B cell (primary cell): ENCODE measurements at regions of chr1 and their contacts with region 1.

Region 1: DNA sequence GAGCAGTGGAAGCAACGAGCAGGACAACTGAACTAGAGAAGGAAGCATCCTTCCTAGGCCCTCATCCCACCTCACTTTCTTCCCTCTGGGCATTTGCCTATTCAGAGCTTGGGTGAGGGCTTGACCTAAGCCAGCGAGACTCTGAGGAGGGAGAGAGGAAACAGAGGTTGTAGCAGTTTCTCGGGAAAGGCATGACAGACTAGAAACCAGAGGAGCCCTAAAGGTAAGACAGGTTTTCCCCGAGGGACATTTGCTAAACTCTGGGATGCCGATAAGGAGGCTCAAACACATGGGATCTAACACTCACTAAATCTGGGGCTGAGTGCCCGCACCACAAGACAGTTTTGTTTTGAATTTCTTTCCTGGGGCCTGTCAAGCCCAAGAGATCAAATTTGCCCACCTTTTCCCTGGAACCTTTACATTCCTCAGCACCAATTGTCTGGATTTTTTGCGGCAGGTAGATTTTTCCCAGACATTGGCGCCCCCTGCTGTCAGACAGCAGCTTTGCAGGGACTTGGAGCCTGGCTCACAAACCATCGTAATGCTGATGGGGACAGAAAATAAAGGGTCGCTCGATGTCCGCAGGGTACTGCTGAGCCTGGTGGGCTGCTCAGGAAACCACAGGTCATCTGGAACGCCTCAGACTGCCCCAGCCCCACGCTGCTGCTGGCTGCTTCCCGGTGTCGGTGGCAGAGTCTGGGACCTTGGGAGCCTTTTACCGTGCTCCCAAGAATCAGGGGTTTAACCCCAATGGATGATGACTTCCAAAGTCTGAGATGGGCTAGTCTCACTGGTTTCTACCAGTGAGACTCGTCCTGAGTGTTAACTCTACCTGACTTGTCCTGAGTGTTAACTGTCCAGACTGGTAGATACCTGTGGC is 23.4 kb upstream of the TSPAN2 start:
- DNase-seq: peak; percentile 62
- ATAC-seq: peak; percentile 39
- H3K4me3 ChIP-seq: no peak overlapping the region
- H3K4me3 Mint-ChIP-seq: no peak overlapping the region
- H3K27ac ChIP-seq: no peak overlapping the region
- H3K27ac Mint-ChIP-seq: no peak overlapping the region
- H3K4me1 ChIP-seq: no peaks in the 10 kb centered on the region
- H3K4me1 Mint-ChIP-seq: no peaks in the 10 kb centered on the region
- H3K27me3 ChIP-seq: peaks cover 0 to 3% (median 0%) of the 10 kb centered on the region in 4 experiments
- H3K27me3 Mint-ChIP-seq: peaks cover 10% of the 10 kb centered on the region
- CTCF ChIP-seq: peak; percentile 99

Region 2: GRCh38 chr1:114854693-114855320 is 257.9 kb before region 1 on chr1 and contains the start of gene SYCP1:
- CTCF ChIA-PET with region 1: no interaction called
- POLR2A ChIA-PET with region 1: no interaction called
- intact Hi-C with region 1: no loop called
- DNase-seq: peak; percentile 3
- ATAC-seq: no peak
- H3K4me3 ChIP-seq: no peak within 1 kb of the TSS
- H3K4me3 Mint-ChIP-seq: peak within 1 kb of the TSS; percentile 57
- H3K27ac ChIP-seq: no peak within 1 kb of the TSS
- H3K27ac Mint-ChIP-seq: no peak within 1 kb of the TSS
- H3K4me1 ChIP-seq: peaks cover 0 to 3% of the 10 kb centered on the region in 2 donors
- H3K4me1 Mint-ChIP-seq: peaks cover 5% of the 10 kb centered on the region
- H3K27me3 ChIP-seq: peaks cover 0 to 20% (median 10%) of the 10 kb centered on the region in 4 experiments
- H3K27me3 Mint-ChIP-seq: peaks cover 27% of the 10 kb centered on the region
- CTCF ChIP-seq: no peak
- total RNA-seq, gene SYCP1: not detected in 2 replicates

Region 3: DNA sequence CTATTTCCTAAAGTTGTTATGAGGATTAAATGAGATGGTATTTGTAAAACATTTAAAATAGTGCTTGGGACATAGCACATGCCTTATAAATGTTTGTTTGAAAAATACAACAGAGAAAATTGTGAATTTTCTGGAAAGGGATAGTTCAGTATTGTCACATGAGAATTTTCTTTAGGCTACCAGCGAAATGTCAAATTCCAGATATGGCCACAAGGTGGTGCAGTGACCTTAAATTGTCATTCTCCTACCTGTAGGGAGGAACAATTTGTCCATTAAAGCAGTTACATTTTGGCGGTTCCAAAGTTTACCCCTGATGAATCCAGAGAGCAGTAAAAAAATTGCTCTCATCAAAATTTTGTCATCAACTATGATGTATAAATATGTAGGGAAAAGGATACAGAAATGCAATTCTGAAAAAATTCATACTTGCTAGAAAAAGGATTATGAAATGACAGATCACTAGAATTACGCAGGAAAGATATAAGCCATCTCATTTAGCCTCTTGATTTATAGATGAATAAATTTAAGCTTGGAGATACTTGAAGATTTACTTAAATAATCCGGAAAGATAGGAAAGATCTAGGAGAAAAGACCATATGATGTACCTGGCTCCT is 133.4 kb before region 1 on chr1:
- CTCF ChIA-PET with region 1: interaction called, 92 read pairs
- POLR2A ChIA-PET with region 1: no interaction called
- intact Hi-C with region 1: loop called (anchors 1 kb)
- DNase-seq: peak; percentile 69
- ATAC-seq: no peak
- H3K4me3 ChIP-seq: no peak overlapping the region
- H3K4me3 Mint-ChIP-seq: no peak overlapping the region
- H3K27ac ChIP-seq: no peak overlapping the region
- H3K27ac Mint-ChIP-seq: no peak overlapping the region
- H3K4me1 ChIP-seq: no peaks in the 10 kb centered on the region
- H3K4me1 Mint-ChIP-seq: no peaks in the 10 kb centered on the region
- H3K27me3 ChIP-seq: peaks cover 0 to 11% (median 2%) of the 10 kb centered on the region in 4 experiments
- H3K27me3 Mint-ChIP-seq: peaks cover 42% of the 10 kb centered on the region
- CTCF ChIP-seq: peak; percentile 97

Region 4: DNA sequence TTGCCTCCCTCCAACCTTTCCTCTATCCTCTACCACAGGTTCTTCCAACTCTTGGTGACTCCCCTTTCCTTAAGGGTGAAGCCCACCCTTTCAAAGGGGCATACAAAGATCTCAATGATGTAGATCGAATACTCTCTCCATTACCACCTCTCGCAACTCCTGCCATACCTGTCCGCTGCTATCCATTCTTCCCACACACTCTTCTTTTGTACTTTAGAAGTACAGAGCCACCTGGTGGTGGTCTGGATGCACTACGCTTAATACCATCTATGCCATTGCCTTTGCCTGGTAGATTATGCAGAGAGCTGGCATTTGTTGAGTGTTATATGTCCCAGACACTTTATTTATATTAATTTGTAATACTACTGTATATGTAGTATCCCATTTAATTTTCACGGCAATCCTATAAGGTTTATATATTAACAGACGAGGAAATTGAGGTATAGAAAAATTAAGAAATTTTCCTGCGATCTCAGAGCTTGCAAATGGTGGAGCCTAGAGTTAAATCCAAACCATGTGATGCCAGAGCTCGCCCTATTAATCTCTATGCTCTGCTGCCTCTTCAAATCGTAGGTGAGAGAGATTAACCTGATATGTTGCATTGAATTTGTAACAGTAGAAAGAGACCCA is 60.2 kb before region 1 on chr1:
- CTCF ChIA-PET with region 1: interaction called, 27 read pairs
- POLR2A ChIA-PET with region 1: no interaction called
- intact Hi-C with region 1: loop called (anchors 5 kb)
- DNase-seq: peak; percentile 62
- ATAC-seq: peak; percentile 73
- H3K4me3 ChIP-seq: no peak overlapping the region
- H3K4me3 Mint-ChIP-seq: no peak overlapping the region
- H3K27ac ChIP-seq: no peak overlapping the region
- H3K27ac Mint-ChIP-seq: no peak overlapping the region
- H3K4me1 ChIP-seq: no peaks in the 10 kb centered on the region
- H3K4me1 Mint-ChIP-seq: no peaks in the 10 kb centered on the region
- H3K27me3 ChIP-seq: peaks cover 0 to 2% (median 0%) of the 10 kb centered on the region in 4 experiments
- H3K27me3 Mint-ChIP-seq: no peaks in the 10 kb centered on the region
- CTCF ChIP-seq: peak; percentile 98

Region 5: GRCh38 chr1:115089420-115090185 is 23.1 kb before region 1 on chr1 and contains the start of gene TSPAN2:
- CTCF ChIA-PET with region 1: interaction called, 16 read pairs
- POLR2A ChIA-PET with region 1: no interaction called
- intact Hi-C with region 1: no loop called
- DNase-seq: peak; percentile 64
- ATAC-seq: peak; percentile 89
- H3K4me3 ChIP-seq: peak within 1 kb of the TSS; percentile 50 to 74 (median 72)
- H3K4me3 Mint-ChIP-seq: peak within 1 kb of the TSS; percentile 88
- H3K27ac ChIP-seq: peak within 1 kb of the TSS in 1 of 2 donors; percentile 26
- H3K27ac Mint-ChIP-seq: peak within 1 kb of the TSS; percentile 62
- H3K4me1 ChIP-seq: peaks cover 5 to 16% of the 10 kb centered on the region in 2 donors
- H3K4me1 Mint-ChIP-seq: peaks cover 11% of the 10 kb centered on the region
- H3K27me3 ChIP-seq: peaks cover 0 to 16% (median 4%) of the 10 kb centered on the region in 4 experiments
- H3K27me3 Mint-ChIP-seq: peaks cover 19% of the 10 kb centered on the region
- CTCF ChIP-seq: no peak
- total RNA-seq, gene TSPAN2: 0.17 and 0.34 TPM in 2 replicates

Region 6: GRCh38 chr1:115138968-115139367 is 26.2 kb after region 1 on chr1:
- CTCF ChIA-PET with region 1: interaction called, 13 read pairs
- POLR2A ChIA-PET with region 1: no interaction called
- intact Hi-C with region 1: no loop called
- DNase-seq: peak; percentile 63
- ATAC-seq: peak; percentile 76
- H3K4me3 ChIP-seq: no peak overlapping the region
- H3K4me3 Mint-ChIP-seq: peak overlapping the region; percentile 55
- H3K27ac ChIP-seq: no peak overlapping the region
- H3K27ac Mint-ChIP-seq: no peak overlapping the region
- H3K4me1 ChIP-seq: peaks cover 0 to 4% of the 10 kb centered on the region in 2 donors
- H3K4me1 Mint-ChIP-seq: peaks cover 4% of the 10 kb centered on the region
- H3K27me3 ChIP-seq: peaks cover 0 to 10% (median 3%) of the 10 kb centered on the region in 4 experiments
- H3K27me3 Mint-ChIP-seq: peaks cover 32% of the 10 kb centered on the region
- CTCF ChIP-seq: peak; percentile 83